Activated naive CD8-positive, alpha-beta T cell treated with anti-CD3 and anti-CD28 coated beads, Interleukin-2, amount 10 ng/mL, durations not matched to agents 7 days and 5 days (primary cell): ENCODE measurements at regions of chr11 and their contacts with region 1.

Region 1: DNA sequence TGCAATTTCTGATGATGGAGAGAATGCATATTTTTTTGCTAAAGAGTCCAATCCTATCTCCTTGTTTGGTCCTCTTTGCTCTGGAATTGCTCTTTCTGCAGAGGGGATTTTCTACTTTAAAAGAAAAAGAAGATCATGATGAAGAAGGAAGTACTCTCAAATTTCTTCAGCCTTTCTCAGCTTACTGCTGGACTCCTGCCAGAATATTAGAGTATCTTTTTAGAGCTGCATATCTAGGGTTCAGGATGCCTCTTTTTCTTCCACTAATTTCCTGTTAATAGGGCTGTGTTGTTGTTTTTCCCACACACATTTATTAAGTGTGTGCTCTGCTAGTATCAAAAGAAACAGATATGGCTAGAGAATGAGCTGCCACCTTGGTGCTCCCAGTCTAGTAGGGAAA is 18.2 kb downstream of the UBASH3B start:
- DNase-seq: no peak
- ATAC-seq: no peak
- H3K4me3 Mint-ChIP-seq: no peak overlapping the region
- H3K27ac Mint-ChIP-seq: no peak overlapping the region
- H3K4me1 Mint-ChIP-seq: peaks cover 39% of the 10 kb centered on the region
- H3K27me3 Mint-ChIP-seq: no peaks in the 10 kb centered on the region

Region 2: GRCh38 chr11:122646549-122647340 is 27.0 kb before region 1 on chr11:
- POLR2A ChIA-PET with region 1: no interaction called
- DNase-seq: no peak
- ATAC-seq: no peak
- H3K4me3 Mint-ChIP-seq: no peak overlapping the region
- H3K27ac Mint-ChIP-seq: no peak overlapping the region
- H3K4me1 Mint-ChIP-seq: peaks cover 11% of the 10 kb centered on the region
- H3K27me3 Mint-ChIP-seq: peaks cover 5% of the 10 kb centered on the region

Region 3: DNA sequence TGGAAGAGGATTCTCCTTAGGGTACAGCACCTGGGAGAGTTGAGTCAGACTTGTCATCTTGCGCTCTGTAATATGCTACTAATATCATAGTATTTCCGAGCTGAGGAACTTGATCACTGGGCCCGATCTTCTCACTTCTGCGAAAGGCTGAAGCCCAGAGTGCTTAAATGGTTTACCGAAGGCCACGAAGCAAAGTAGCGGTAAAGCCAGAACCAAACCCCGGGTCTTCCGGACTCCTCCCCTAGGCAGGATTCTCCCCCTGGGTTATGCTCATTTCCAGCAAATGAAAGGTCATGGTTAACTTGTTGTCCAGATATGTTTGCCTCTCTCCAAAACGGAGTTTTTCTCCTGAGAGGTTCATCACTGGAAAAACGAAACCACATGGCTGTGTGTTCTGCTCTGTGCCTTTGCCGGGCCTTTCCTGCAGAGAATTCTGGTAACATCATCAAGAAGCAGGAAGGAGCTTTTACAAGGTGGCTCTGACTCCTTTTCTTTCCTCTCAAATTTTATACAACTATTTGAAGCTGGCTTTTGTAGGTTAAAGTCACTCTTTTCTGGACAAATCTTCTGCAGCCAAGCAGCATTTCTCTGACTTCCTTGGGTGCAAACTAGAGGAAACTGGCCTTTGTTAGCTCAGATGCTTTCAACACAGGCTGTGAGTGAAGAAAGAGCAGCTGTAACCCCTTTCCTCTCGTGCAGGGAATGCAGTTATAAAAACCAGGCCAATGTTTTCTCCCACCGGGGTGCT is 17.3 kb after region 1 on chr11:
- POLR2A ChIA-PET with region 1: interaction called, 14 read pairs
- DNase-seq: no peak
- ATAC-seq: peak; percentile 53
- H3K4me3 Mint-ChIP-seq: peak overlapping the region; percentile 77
- H3K27ac Mint-ChIP-seq: peak overlapping the region; percentile 88
- H3K4me1 Mint-ChIP-seq: peaks cover 44% of the 10 kb centered on the region
- H3K27me3 Mint-ChIP-seq: no peaks in the 10 kb centered on the region